Psoas muscle (tissue), 8 donors: ENCODE measurements at regions of chrX and their contacts with region 1.

Region 1: GRCh38 chrX:50100188-50100587 is 100.6 kb downstream of the AKAP4 start:
- DNase-seq: no peak
- ATAC-seq: peak in 1 of 4 donors; percentile 31
- H3K4me3 ChIP-seq: no peak overlapping the region
- H3K27ac ChIP-seq: no peak overlapping the region
- H3K4me1 ChIP-seq: no peaks in the 10 kb centered on the region
- H3K27me3 ChIP-seq: peaks cover 0 to 22% (median 0%) of the 10 kb centered on the region in 3 donors
- CTCF ChIP-seq: peak; percentile 19

Region 2: DNA sequence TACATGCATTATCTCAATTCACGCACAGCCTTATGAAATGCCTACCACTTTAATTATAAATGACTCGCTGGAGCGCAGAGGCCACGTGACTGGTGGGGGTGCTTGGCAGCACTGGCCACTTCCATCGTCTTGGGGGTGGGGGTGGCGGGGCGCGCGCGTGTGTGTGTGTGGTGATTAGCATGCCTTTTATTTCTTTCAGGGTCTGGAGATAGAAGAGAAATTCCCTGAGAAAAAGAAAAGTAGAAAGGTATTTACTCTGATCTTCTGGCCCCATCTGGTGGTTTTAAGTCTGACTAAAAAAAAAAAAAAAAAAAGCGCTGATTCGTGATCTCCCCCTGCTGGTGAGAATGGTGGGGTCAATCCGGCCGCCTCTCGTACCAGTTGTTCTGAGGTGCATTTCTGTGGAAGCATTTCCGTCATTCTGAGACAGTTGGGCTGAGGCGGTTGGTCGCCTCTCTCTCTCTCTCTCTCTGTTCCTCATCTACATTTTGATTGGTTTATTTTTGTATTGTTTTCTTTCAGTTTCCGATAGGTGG is 104.2 kb after region 1 on chrX and contains the start of gene CCNB3:
- intact Hi-C with region 1: loop called in 1 of 2 experiments (anchors 5 kb)
- DNase-seq: peak; percentile 70 to 79
- ATAC-seq: peak; percentile 80 to 97 (median 94)
- H3K4me3 ChIP-seq: peak within 1 kb of the TSS; percentile 52
- H3K27ac ChIP-seq: peak within 1 kb of the TSS; percentile 16
- H3K4me1 ChIP-seq: no peaks in the 10 kb centered on the region
- H3K27me3 ChIP-seq: peaks cover 0 to 11% (median 0%) of the 10 kb centered on the region in 3 donors
- CTCF ChIP-seq: peak; percentile 65
- total RNA-seq, gene CCNB3: 0.25 to 1.1 (median 0.37) TPM

Region 3: DNA sequence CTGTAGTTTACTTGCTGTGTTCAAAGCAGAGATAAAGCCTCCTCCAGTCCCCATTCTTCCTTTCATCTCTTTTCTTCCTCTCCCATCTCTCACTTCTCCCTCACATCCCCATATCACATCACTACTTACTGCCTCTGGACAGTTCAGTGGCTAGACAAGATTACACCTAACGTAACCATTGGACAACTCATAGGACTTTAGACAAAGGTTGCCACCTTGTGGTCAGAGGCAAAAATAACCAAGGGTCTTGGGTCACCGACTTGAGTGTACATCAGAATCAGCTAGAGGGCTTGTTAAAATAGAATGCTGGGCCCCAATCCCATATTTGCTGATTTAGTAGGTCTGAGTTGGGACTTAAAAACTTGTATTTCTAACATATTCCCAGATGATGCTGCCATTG is 479.8 kb after region 1 on chrX:
- intact Hi-C with region 1: loop called in 1 of 2 experiments (anchors 10 kb)
- DNase-seq: no peak
- ATAC-seq: no peak
- H3K4me3 ChIP-seq: no peak overlapping the region
- H3K27ac ChIP-seq: no peak overlapping the region
- H3K4me1 ChIP-seq: no peaks in the 10 kb centered on the region
- H3K27me3 ChIP-seq: peaks cover 0 to 18% (median 0%) of the 10 kb centered on the region in 3 donors
- CTCF ChIP-seq: peak; percentile 56